ENCODE measurements at regions of chr17 and their contacts with region 1.

Region 1: GRCh38 chr17:8057691-8058114 is 18.8 kb downstream of the ALOX15B start:
- DNase-seq: peak; percentile 67
- H3K4me3 ChIP-seq: no peak overlapping the region
- CTCF ChIP-seq: peak; percentile 73

Region 2: GRCh38 chr17:8016632-8017478 is 40.8 kb before region 1 on chr17:
- in situ Hi-C with region 1: loop called (anchors 5 kb)
- DNase-seq: no peak
- H3K4me3 ChIP-seq: peak overlapping the region; percentile 32
- CTCF ChIP-seq: peak; percentile 46

Region 3: DNA sequence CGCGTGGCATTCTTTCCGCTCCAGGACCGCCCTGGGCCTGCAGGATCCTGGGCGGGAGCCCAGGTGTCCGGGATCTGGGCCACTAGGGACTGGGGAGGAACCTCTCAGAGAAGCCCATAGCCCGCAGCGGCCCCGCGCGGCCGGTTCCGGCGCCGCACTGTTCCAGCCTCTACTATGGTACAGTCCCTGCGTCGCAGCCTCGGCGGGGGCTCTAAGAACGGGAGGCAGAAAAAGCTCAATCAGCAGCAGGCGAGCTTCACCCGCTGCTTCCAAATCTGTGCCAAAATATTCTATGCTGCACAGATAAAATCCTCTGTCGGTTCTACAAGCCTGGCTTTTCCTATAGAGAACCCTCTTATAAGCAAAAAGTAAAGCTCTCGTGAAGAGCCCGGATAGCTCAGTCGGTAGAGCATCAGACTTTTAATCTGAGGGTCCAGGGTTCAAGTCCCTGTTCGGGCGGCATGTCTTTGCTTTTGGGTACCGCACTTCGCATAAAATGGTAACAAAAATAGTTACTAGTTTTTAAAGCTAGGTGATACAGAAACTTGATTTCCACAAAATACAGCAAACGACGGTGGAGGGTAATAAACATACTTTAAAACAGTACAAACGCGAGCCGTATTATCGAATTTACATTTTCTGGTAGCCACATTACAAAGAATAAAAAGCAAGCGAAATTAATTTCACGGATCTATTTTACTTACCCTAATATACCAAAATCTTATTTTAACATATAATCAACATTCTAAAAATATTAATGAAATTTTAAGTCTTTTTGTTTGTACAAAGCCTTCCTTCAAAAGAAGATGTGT is 61.3 kb after region 1 on chr17:
- in situ Hi-C with region 1: loop called (anchors 10 kb)
- DNase-seq: no peak
- H3K4me3 ChIP-seq: peak overlapping the region; percentile 58
- CTCF ChIP-seq: peak; percentile 92